CD8-positive, alpha-beta memory T cell (primary cell): ENCODE measurements at regions of chr4 and their contacts with region 1.

Region 1: GRCh38 chr4:103060453-103061148 is 16.0 kb downstream of the SLC9B2 start:
- DNase-seq: no peak
- H3K4me3 ChIP-seq: no peak overlapping the region
- H3K4me3 Mint-ChIP-seq: no peak overlapping the region
- H3K27ac ChIP-seq: no peak overlapping the region
- H3K27ac Mint-ChIP-seq: peak overlapping the region in 1 of 8 donors; percentile 16
- H3K4me1 ChIP-seq: no peaks in the 10 kb centered on the region
- H3K4me1 Mint-ChIP-seq: peaks cover 0 to 4% (median 0%) of the 10 kb centered on the region in 3 donors
- H3K27me3 ChIP-seq: no peaks in the 10 kb centered on the region
- H3K27me3 Mint-ChIP-seq: no peaks in the 10 kb centered on the region

Region 2: GRCh38 chr4:102994803-102995202 is 65.8 kb before region 1 on chr4:
- CTCF ChIA-PET with region 1: no interaction called
- POLR2A ChIA-PET with region 1: no interaction called
- DNase-seq: no peak
- H3K4me3 ChIP-seq: no peak overlapping the region
- H3K4me3 Mint-ChIP-seq: no peak overlapping the region
- H3K27ac ChIP-seq: no peak overlapping the region
- H3K27ac Mint-ChIP-seq: no peak overlapping the region
- H3K4me1 ChIP-seq: no peaks in the 10 kb centered on the region
- H3K4me1 Mint-ChIP-seq: no peaks in the 10 kb centered on the region
- H3K27me3 ChIP-seq: no peaks in the 10 kb centered on the region
- H3K27me3 Mint-ChIP-seq: peaks cover 0 to 1% of the 10 kb centered on the region in 2 donors

Region 3: GRCh38 chr4:103008875-103009729 is 51.5 kb before region 1 on chr4:
- CTCF ChIA-PET with region 1: no interaction called
- POLR2A ChIA-PET with region 1: interaction called, 11 read pairs
- DNase-seq: peak in 2 of 5 donors; percentile 46 to 54
- H3K4me3 ChIP-seq: no peak overlapping the region
- H3K4me3 Mint-ChIP-seq: no peak overlapping the region
- H3K27ac ChIP-seq: no peak overlapping the region
- H3K27ac Mint-ChIP-seq: no peak overlapping the region
- H3K4me1 ChIP-seq: no peaks in the 10 kb centered on the region
- H3K4me1 Mint-ChIP-seq: no peaks in the 10 kb centered on the region
- H3K27me3 ChIP-seq: no peaks in the 10 kb centered on the region
- H3K27me3 Mint-ChIP-seq: no peaks in the 10 kb centered on the region

Region 4: GRCh38 chr4:103099691-103100392 is 39.2 kb after region 1 on chr4 and contains the start of gene BDH2:
- CTCF ChIA-PET with region 1: no interaction called
- POLR2A ChIA-PET with region 1: no interaction called
- DNase-seq: peak; percentile 3 to 79 (median 69)
- H3K4me3 ChIP-seq: peak within 1 kb of the TSS; percentile 63
- H3K4me3 Mint-ChIP-seq: peak within 1 kb of the TSS; percentile 77 to 90 (median 85)
- H3K27ac ChIP-seq: peak within 1 kb of the TSS; percentile 24
- H3K27ac Mint-ChIP-seq: peak within 1 kb of the TSS; percentile 65 to 97 (median 86)
- H3K4me1 ChIP-seq: peaks cover 9% of the 10 kb centered on the region
- H3K4me1 Mint-ChIP-seq: peaks cover 23 to 37% (median 26%) of the 10 kb centered on the region in 3 donors
- H3K27me3 ChIP-seq: no peaks in the 10 kb centered on the region
- H3K27me3 Mint-ChIP-seq: no peaks in the 10 kb centered on the region
- total RNA-seq, gene BDH2: 10.9 to 11.4 TPM

Region 5: GRCh38 chr4:103207673-103208072 is 147.1 kb after region 1 on chr4:
- CTCF ChIA-PET with region 1: no interaction called
- POLR2A ChIA-PET with region 1: no interaction called
- DNase-seq: no peak
- H3K4me3 ChIP-seq: no peak overlapping the region
- H3K4me3 Mint-ChIP-seq: no peak overlapping the region
- H3K27ac ChIP-seq: no peak overlapping the region
- H3K27ac Mint-ChIP-seq: no peak overlapping the region
- H3K4me1 ChIP-seq: no peaks in the 10 kb centered on the region
- H3K4me1 Mint-ChIP-seq: peaks cover 0 to 5% (median 0%) of the 10 kb centered on the region in 3 donors
- H3K27me3 ChIP-seq: no peaks in the 10 kb centered on the region
- H3K27me3 Mint-ChIP-seq: peaks cover 4 to 31% of the 10 kb centered on the region in 2 donors